Calu3 (cell line): ENCODE measurements at regions of chr18 and their contacts with region 1.

Region 1: GRCh38 chr18:22563098-22563707 is 145.5 kb upstream of the CTAGE1 start:
- DNase-seq: peak; percentile 65
- H3K4me3 Mint-ChIP-seq: no peak overlapping the region
- H3K27ac Mint-ChIP-seq: peak overlapping the region; percentile 75
- H3K4me1 Mint-ChIP-seq: peaks cover 46% of the 10 kb centered on the region
- H3K27me3 Mint-ChIP-seq: no peaks in the 10 kb centered on the region
- CTCF ChIP-seq: peak; percentile 52

Region 2: DNA sequence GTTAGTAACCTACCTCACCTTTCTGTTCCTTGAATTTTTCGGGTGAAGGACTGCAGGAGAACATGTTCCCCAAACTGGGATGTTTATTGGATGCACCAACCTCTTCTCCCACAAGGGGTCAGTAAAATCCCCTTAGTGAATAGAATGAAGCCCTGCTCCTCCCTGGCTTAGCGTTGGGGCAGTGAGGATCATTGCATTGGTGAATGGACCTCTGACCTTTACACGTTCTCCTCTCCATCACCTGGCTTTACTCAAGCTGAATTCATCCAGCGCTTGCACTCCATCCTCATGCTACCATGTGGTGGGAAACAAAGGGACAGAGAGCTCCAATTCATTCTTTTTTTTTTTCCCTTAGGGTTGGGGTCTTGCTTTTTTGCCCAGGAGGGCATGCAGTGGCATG is 665.4 kb before region 1 on chr18:
- CTCF ChIA-PET with region 1: no interaction called
- intact Hi-C with region 1: loop called (anchors 5 kb)
- DNase-seq: peak; percentile 73
- H3K4me3 Mint-ChIP-seq: no peak overlapping the region
- H3K27ac Mint-ChIP-seq: no peak overlapping the region
- H3K4me1 Mint-ChIP-seq: peaks cover 8% of the 10 kb centered on the region
- H3K27me3 Mint-ChIP-seq: no peaks in the 10 kb centered on the region
- CTCF ChIP-seq: peak; percentile 70

Region 3: GRCh38 chr18:22108674-22109073 is 454.5 kb before region 1 on chr18:
- CTCF ChIA-PET with region 1: no interaction called
- intact Hi-C with region 1: loop called (anchors 5 kb)
- DNase-seq: peak; percentile 31
- H3K4me3 Mint-ChIP-seq: no peak overlapping the region
- H3K27ac Mint-ChIP-seq: no peak overlapping the region
- H3K4me1 Mint-ChIP-seq: peaks cover 22% of the 10 kb centered on the region
- H3K27me3 Mint-ChIP-seq: no peaks in the 10 kb centered on the region
- CTCF ChIP-seq: no peak

Region 4: GRCh38 chr18:22174341-22175145 is 388.7 kb before region 1 on chr18:
- CTCF ChIA-PET with region 1: interaction called, 14 read pairs
- intact Hi-C with region 1: loop called (anchors 2 kb)
- DNase-seq: no peak
- H3K4me3 Mint-ChIP-seq: peak overlapping the region; percentile 98
- H3K27ac Mint-ChIP-seq: peak overlapping the region; percentile 98
- H3K4me1 Mint-ChIP-seq: peaks cover 1% of the 10 kb centered on the region
- H3K27me3 Mint-ChIP-seq: no peaks in the 10 kb centered on the region
- CTCF ChIP-seq: no peak

Region 5: DNA sequence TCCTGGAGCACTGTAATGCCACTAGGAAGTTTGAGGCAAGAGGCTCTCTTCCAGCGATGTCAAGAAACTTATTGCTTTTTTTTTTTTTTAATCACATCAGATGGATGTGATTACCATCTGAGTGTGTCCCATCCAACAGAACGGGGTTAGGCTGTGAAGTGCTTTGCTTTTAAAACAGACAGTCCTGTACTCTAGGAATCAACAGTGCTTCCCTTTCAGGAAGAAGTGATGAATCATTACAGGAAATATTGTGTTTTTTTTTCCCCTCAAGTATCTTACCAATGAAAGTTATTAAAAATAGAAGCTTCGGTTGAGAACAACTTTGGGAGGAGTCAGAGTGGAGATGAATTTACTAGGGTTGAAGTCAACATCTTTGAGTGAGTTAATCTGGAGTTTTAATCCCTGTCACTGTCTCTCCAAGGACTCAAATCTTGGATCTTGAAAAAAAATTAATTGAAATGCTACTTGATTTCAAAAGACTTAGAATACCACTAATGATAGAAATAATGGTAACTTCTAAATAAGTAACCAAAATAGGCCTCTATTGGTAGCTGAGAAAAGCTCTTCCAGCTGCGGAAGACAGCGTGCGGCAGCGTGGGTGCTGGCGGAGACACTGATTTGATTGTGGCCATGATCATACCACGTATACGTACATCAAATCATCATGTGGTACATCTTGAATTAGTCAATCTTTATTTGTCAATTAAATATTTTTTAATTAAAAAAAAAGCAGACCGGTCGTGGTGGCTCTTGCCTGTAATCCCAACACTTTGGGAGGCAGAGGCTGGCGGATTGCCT is 348.3 kb before region 1 on chr18:
- CTCF ChIA-PET with region 1: no interaction called
- intact Hi-C with region 1: loop called (anchors 5 kb)
- DNase-seq: no peak
- H3K4me3 Mint-ChIP-seq: no peak overlapping the region
- H3K27ac Mint-ChIP-seq: peak overlapping the region; percentile 39
- H3K4me1 Mint-ChIP-seq: peaks cover 33% of the 10 kb centered on the region
- H3K27me3 Mint-ChIP-seq: no peaks in the 10 kb centered on the region
- CTCF ChIP-seq: no peak

Region 6: GRCh38 chr18:22391407-22392345 is 171.5 kb before region 1 on chr18:
- CTCF ChIA-PET with region 1: interaction called, 3 read pairs
- intact Hi-C with region 1: loop called (anchors 5 kb)
- DNase-seq: peak; percentile 77
- H3K4me3 Mint-ChIP-seq: no peak overlapping the region
- H3K27ac Mint-ChIP-seq: peak overlapping the region; percentile 50
- H3K4me1 Mint-ChIP-seq: peaks cover 39% of the 10 kb centered on the region
- H3K27me3 Mint-ChIP-seq: no peaks in the 10 kb centered on the region
- CTCF ChIP-seq: no peak

Region 7: GRCh38 chr18:22523481-22523880 is 39.7 kb before region 1 on chr18:
- CTCF ChIA-PET with region 1: no interaction called
- intact Hi-C with region 1: no loop called
- DNase-seq: no peak
- H3K4me3 Mint-ChIP-seq: no peak overlapping the region
- H3K27ac Mint-ChIP-seq: no peak overlapping the region
- H3K4me1 Mint-ChIP-seq: peaks cover 40% of the 10 kb centered on the region
- H3K27me3 Mint-ChIP-seq: no peaks in the 10 kb centered on the region
- CTCF ChIP-seq: no peak

Region 8: GRCh38 chr18:22710628-22711380 is 147.6 kb after region 1 on chr18:
- CTCF ChIA-PET with region 1: interaction called, 5 read pairs
- intact Hi-C with region 1: loop called (anchors 10 kb)
- DNase-seq: peak; percentile 60
- H3K4me3 Mint-ChIP-seq: peak overlapping the region; percentile 74
- H3K27ac Mint-ChIP-seq: peak overlapping the region; percentile 70
- H3K4me1 Mint-ChIP-seq: peaks cover 43% of the 10 kb centered on the region
- H3K27me3 Mint-ChIP-seq: no peaks in the 10 kb centered on the region
- CTCF ChIP-seq: no peak

Region 9: DNA sequence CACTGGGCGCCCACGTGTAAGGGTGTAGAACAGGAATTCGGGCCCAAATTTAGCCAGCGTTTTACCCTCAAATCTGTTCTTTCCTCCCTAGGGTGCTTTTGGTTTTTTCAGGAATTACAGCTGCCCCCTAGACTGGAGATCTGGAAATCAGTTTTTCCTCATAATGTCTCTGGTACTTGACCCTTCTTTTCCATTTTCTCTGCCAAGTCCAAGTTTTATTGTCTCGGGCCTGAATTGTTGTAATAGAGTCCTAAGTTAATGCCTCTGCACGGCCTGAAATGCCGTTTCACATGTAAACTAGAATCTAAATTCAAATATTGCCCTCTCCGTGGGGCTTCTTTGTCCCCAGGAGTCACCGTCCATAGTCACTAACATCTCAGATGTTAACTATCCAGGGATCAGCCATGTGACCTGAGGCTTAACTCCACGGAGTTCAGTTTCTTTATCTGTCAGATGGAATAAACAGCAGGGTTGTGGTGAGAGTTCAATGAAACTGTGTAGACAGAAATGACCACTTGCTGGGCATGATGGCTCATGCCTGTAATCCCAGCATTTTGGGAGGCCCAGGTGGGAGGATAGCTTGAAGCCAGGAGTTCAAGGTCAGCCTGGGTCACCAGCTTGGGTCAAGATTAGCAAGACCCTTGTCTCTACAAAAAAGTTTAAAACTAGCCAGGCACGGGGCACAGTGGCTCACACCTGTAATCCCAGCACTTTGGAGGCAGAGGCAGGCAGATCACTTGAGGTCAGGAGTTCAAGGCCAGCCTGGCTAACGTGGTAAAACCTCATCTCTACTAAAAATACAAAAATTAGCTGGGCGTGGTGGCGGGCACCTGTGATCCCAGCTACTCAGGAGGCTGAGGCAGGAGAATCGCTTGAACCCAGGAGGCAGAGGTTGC is 559.4 kb after region 1 on chr18:
- CTCF ChIA-PET with region 1: no interaction called
- intact Hi-C with region 1: no loop called
- DNase-seq: no peak
- H3K4me3 Mint-ChIP-seq: no peak overlapping the region
- H3K27ac Mint-ChIP-seq: no peak overlapping the region
- H3K4me1 Mint-ChIP-seq: peaks cover 4% of the 10 kb centered on the region
- H3K27me3 Mint-ChIP-seq: no peaks in the 10 kb centered on the region
- CTCF ChIP-seq: no peak